ENCODE measurements at regions of chr5 and their contacts with region 1.

Region 1: GRCh38 chr5:52948418-52949076 is 40.6 kb upstream of the ITGA2 start:
- DNase-seq: peak; percentile 21 to 78 (median 63)
- ATAC-seq: peak; percentile 100
- H3K4me3 ChIP-seq: no peak overlapping the region
- H3K4me3 Mint-ChIP-seq: no peak overlapping the region
- H3K27ac ChIP-seq: no peak overlapping the region
- H3K27ac Mint-ChIP-seq: no peak overlapping the region
- H3K4me1 ChIP-seq: peaks cover 3% of the 10 kb centered on the region
- H3K4me1 Mint-ChIP-seq: peaks cover 20% of the 10 kb centered on the region
- H3K27me3 ChIP-seq: no peaks in the 10 kb centered on the region
- H3K27me3 Mint-ChIP-seq: no peaks in the 10 kb centered on the region
- CTCF ChIP-seq: peak; percentile 85

Region 2: GRCh38 chr5:52995095-52995494 is 46.5 kb after region 1 on chr5:
- CTCF ChIA-PET with region 1: no interaction called
- POLR2A ChIA-PET with region 1: no interaction called
- intact Hi-C with region 1: loop called in 1 of 2 experiments (anchors 1 kb)
- DNase-seq: no peak
- ATAC-seq: no peak
- H3K4me3 ChIP-seq: no peak overlapping the region
- H3K4me3 Mint-ChIP-seq: no peak overlapping the region
- H3K27ac ChIP-seq: no peak overlapping the region
- H3K27ac Mint-ChIP-seq: no peak overlapping the region
- H3K4me1 ChIP-seq: peaks cover 2% of the 10 kb centered on the region
- H3K4me1 Mint-ChIP-seq: peaks cover 2% of the 10 kb centered on the region
- H3K27me3 ChIP-seq: peaks cover 0 to 2% of the 10 kb centered on the region in 2 experiments
- H3K27me3 Mint-ChIP-seq: peaks cover 5% of the 10 kb centered on the region
- CTCF ChIP-seq: no peak

Region 3: DNA sequence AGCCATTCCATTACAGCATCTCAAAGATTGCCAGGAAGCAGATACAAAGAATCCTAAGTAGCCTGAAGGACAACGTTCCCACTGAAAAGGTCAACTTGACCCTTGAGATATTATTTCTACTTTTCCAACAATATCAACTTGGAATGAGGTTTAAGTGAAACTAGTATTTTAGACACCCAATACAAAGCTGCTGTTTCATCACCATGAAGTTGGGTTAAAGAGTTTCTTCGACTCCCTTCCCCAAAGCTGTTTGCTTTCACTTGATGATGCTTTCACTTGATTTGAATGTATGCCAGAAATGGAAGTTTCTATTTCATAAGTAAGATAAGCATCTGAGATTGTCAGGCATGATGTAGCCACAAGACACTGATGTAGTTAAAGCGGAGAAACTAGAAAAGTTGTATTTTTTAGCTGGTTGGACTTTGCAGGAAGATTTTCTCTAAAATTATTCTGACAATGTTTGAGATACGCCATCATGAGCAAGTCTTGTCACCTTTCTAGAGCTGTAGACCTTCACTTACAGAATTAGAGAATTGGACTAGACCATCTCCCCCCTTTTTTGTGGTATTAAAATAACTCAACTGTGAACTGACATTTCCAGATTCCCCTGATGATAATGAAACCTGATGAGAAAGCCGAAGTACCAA is 140.9 kb after region 1 on chr5:
- CTCF ChIA-PET with region 1: interaction called, 134 read pairs
- POLR2A ChIA-PET with region 1: interaction called, 5 read pairs
- intact Hi-C with region 1: no loop called
- DNase-seq: peak in 1 of 9 experiments; percentile 10
- ATAC-seq: peak; percentile 40
- H3K4me3 ChIP-seq: no peak overlapping the region
- H3K4me3 Mint-ChIP-seq: no peak overlapping the region
- H3K27ac ChIP-seq: no peak overlapping the region
- H3K27ac Mint-ChIP-seq: no peak overlapping the region
- H3K4me1 ChIP-seq: no peaks in the 10 kb centered on the region
- H3K4me1 Mint-ChIP-seq: peaks cover 15% of the 10 kb centered on the region
- H3K27me3 ChIP-seq: no peaks in the 10 kb centered on the region
- H3K27me3 Mint-ChIP-seq: no peaks in the 10 kb centered on the region
- CTCF ChIP-seq: no peak

Region 4: DNA sequence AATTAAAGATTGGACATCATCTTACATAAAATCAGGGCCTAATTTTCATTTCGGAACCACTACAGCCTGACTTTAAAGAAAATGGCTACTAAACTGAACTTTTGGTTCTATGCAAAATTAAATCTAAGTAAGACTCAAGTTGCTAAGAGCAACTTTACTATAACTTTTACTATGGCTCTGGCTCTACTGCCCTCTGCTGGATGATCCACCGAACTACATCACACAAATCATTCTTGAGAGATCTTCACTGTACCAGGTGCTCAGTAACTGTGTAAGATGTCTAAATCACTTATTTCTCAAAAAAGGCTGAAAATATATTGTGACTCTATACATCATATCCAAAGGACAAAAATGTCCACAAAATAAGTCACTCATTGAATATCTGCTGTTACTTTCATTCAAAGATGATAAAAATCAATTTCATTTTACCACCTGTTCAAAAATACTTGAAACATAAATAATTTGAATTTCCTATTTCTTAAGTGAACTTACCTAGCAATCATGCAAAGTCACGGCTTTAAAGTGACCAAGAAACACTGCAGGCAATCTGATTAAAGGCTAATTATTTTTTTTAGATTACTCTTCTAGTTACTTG is 147.5 kb after region 1 on chr5:
- CTCF ChIA-PET with region 1: interaction called, 134 read pairs
- POLR2A ChIA-PET with region 1: interaction called, 11 read pairs
- intact Hi-C with region 1: loop called (anchors 1 kb)
- DNase-seq: peak; percentile 43 to 76 (median 68)
- ATAC-seq: peak; percentile 93
- H3K4me3 ChIP-seq: no peak overlapping the region
- H3K4me3 Mint-ChIP-seq: no peak overlapping the region
- H3K27ac ChIP-seq: no peak overlapping the region
- H3K27ac Mint-ChIP-seq: no peak overlapping the region
- H3K4me1 ChIP-seq: no peaks in the 10 kb centered on the region
- H3K4me1 Mint-ChIP-seq: no peaks in the 10 kb centered on the region
- H3K27me3 ChIP-seq: no peaks in the 10 kb centered on the region
- H3K27me3 Mint-ChIP-seq: no peaks in the 10 kb centered on the region
- CTCF ChIP-seq: peak; percentile 81

Region 5: DNA sequence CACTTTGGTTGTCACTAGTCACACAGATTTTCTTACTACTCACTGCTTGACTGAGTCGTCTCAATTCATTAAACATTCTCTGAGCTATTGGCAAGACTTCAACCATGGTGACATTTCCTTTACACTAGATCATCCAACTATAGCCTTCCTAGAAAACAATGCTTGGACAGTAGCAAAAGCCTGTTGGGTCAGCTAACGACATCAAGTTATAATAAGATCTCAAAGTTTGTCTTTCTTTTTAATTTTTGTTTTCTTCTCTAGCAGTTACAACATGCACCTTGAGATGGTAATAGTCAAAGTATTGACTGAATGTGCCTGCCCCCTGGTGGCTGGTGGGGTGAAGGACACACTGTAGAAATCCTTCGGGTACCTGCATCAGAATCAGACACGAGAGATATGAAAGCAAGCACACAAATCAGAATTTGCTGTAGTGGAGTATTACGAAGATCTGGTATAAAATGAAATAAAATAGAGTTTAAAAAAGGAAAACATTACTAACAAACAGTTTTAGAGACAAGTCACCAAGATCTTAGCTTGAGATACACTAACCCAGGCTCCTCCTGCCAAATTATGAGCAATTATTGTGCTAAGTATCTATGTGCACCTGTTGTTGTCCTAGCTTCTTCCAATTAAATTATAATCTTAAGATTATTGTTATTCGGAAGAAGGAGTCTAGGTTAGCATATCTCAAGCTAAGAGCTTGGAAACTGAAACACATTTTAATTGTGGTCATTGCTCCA is 1280.7 kb after region 1 on chr5:
- CTCF ChIA-PET with region 1: interaction called, 9 read pairs
- POLR2A ChIA-PET with region 1: no interaction called
- intact Hi-C with region 1: loop called in 1 of 2 experiments (anchors 2 kb)
- DNase-seq: peak; percentile 43 to 80 (median 68)
- ATAC-seq: peak; percentile 89
- H3K4me3 ChIP-seq: no peak overlapping the region
- H3K4me3 Mint-ChIP-seq: no peak overlapping the region
- H3K27ac ChIP-seq: no peak overlapping the region
- H3K27ac Mint-ChIP-seq: no peak overlapping the region
- H3K4me1 ChIP-seq: no peaks in the 10 kb centered on the region
- H3K4me1 Mint-ChIP-seq: peaks cover 8% of the 10 kb centered on the region
- H3K27me3 ChIP-seq: no peaks in the 10 kb centered on the region
- H3K27me3 Mint-ChIP-seq: no peaks in the 10 kb centered on the region
- CTCF ChIP-seq: peak; percentile 96

Region 6: DNA sequence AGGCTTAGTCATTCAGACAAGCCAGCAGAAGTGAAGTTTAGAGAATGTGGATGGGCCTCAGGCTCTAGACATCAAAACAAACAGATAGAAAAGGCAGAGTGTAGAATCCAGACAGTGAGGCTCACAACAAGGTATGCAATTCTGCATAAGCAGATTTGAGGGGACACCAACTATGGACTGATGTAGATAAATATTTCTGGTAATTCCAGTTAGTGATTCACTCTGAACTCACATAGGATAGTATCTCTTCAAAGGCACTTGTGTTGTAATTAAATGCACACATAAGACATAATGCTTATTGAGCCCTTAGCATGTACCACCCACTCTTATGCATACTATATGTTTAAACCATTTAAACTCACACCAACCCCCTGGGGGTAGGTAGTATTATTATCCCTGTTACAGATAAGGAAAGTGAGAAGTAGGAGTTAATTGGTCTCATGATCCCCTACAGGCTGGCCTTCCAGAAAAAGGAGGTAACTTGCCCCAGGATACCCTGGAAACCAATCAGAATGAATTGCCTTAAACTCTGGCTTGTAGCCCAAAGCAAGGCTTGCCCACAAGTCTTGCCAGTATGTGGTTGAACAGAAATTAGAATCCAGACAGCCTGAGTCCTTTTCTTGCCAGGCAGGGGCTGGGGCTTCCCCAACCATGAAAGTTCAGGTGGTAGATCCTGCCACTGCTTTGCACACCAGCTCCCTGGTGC is 1467.5 kb after region 1 on chr5:
- CTCF ChIA-PET with region 1: interaction called, 3 read pairs
- POLR2A ChIA-PET with region 1: no interaction called
- intact Hi-C with region 1: loop called in 1 of 2 experiments (anchors 10 kb)
- DNase-seq: no peak
- ATAC-seq: no peak
- H3K4me3 ChIP-seq: no peak overlapping the region
- H3K4me3 Mint-ChIP-seq: no peak overlapping the region
- H3K27ac ChIP-seq: no peak overlapping the region
- H3K27ac Mint-ChIP-seq: no peak overlapping the region
- H3K4me1 ChIP-seq: no peaks in the 10 kb centered on the region
- H3K4me1 Mint-ChIP-seq: no peaks in the 10 kb centered on the region
- H3K27me3 ChIP-seq: no peaks in the 10 kb centered on the region
- H3K27me3 Mint-ChIP-seq: no peaks in the 10 kb centered on the region
- CTCF ChIP-seq: no peak

Measured in CD8-positive, alpha-beta T cell (primary cell).